Activated CD4-positive, alpha-beta memory T cell treated with anti-CD3 and anti-CD28 coated beads for 36 hours (primary cell): ENCODE measurements at regions of chr3 and their contacts with region 1.

Region 1: DNA sequence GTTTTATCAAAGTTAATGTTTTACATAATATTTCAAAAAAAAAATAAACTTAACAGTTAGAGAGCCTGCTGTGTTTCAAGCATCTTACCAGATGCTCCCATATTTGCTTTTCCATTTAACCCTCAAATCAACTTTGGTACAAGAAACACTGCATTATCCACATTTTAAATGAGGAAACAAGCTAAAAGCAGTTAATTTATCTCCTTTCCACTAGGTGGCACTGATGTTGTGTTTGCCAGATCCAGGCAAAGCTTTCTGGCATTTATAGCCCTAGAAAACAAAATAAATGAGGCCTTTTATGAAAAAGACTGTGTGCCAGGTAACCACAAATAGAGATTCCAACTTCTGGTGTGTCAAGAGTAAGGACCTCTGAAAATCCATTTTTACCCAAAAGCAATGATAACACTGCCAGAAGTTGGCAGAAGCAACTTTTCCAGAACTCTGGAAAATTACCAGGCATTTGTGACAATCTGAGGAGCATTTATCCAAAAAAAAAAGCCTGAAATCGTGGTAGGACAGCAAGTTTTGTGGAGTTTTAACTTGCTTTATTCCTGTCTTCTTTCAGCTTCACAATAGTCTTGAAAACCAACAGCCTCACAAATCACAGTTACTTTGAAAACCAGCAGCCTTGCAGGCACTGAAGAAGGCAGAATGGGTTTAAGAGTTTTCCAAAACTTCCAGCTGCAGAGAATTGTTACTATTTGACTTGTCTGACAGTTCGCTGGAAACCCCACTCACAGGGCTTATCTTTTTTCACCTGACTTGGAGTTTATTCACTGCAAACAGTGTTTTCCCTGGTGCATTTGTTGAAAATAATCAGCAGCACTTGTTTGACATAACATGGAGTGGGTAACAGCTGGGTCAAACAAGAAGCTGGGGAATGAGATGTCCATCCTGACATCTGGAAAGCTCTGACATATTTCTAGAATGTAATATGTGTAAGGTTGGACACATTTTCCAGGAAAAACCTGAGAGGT is 9.2 kb downstream of the FAM162A start:
- DNase-seq: peak; percentile 20
- H3K4me3 Mint-ChIP-seq: no peak overlapping the region
- H3K27ac Mint-ChIP-seq: no peak overlapping the region
- H3K4me1 Mint-ChIP-seq: peaks cover 32% of the 10 kb centered on the region
- H3K27me3 Mint-ChIP-seq: no peaks in the 10 kb centered on the region

Region 2: GRCh38 chr3:122409446-122409845 is 16.3 kb after region 1 on chr3:
- CTCF ChIA-PET with region 1: interaction called, 11 read pairs
- POLR2A ChIA-PET with region 1: no interaction called
- intact Hi-C with region 1: no loop called
- DNase-seq: no peak
- H3K4me3 Mint-ChIP-seq: no peak overlapping the region
- H3K27ac Mint-ChIP-seq: peak overlapping the region; percentile 4
- H3K4me1 Mint-ChIP-seq: peaks cover 40% of the 10 kb centered on the region
- H3K27me3 Mint-ChIP-seq: no peaks in the 10 kb centered on the region

Region 3: GRCh38 chr3:122957707-122958689 is 564.8 kb after region 1 on chr3:
- CTCF ChIA-PET with region 1: no interaction called
- POLR2A ChIA-PET with region 1: no interaction called
- intact Hi-C with region 1: no loop called
- DNase-seq: no peak
- H3K4me3 Mint-ChIP-seq: no peak overlapping the region
- H3K27ac Mint-ChIP-seq: no peak overlapping the region
- H3K4me1 Mint-ChIP-seq: no peaks in the 10 kb centered on the region
- H3K27me3 Mint-ChIP-seq: peaks cover 2% of the 10 kb centered on the region